ENCODE measurements at regions of chr12 and their contacts with region 1.

Region 1: GRCh38 chr12:59780605-59781135 is 184.8 kb downstream of the SLC16A7 start:
- DNase-seq: peak; percentile 52
- H3K4me3 Mint-ChIP-seq: no peak overlapping the region
- H3K27ac Mint-ChIP-seq: no peak overlapping the region
- H3K4me1 Mint-ChIP-seq: no peaks in the 10 kb centered on the region
- H3K27me3 Mint-ChIP-seq: no peaks in the 10 kb centered on the region
- CTCF ChIP-seq: peak; percentile 40

Region 2: DNA sequence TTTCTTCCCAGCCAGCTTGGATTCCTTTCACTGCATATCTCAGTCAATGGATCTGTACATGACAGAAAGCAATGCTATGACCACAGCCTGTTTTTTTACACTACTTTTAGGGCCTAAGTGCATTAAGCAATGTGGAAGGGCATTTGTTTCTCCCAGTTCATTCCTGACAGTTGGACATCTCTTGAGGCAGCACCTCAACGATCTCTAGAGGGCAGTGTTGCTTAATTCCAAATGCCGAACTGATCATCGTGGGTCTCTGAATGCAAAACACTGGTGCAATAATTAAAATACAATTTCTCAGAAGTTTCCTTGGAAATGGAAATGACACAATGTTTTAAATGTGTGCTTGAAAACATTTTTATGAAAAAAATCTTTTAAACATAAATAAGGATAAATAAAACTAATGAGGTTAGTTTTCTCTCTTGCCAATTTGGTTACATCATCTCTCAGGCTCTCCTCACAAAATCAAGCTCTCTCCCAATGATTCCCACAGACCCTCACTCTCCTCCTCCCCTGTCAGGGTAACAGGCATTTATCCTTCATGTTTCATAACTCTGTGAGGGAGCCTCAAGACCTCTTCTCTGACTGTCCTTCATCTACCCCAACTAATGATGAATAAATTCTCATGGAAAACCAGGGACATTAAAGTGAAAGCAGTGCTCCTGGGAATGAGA is 377.3 kb before region 1 on chr12:
- CTCF ChIA-PET with region 1: no interaction called
- POLR2A ChIA-PET with region 1: no interaction called
- intact Hi-C with region 1: loop called (anchors 1 kb)
- DNase-seq: peak; percentile 83
- H3K4me3 Mint-ChIP-seq: peak overlapping the region; percentile 4
- H3K27ac Mint-ChIP-seq: no peak overlapping the region
- H3K4me1 Mint-ChIP-seq: peaks cover 10% of the 10 kb centered on the region
- H3K27me3 Mint-ChIP-seq: no peaks in the 10 kb centered on the region
- CTCF ChIP-seq: peak; percentile 84

Region 3: DNA sequence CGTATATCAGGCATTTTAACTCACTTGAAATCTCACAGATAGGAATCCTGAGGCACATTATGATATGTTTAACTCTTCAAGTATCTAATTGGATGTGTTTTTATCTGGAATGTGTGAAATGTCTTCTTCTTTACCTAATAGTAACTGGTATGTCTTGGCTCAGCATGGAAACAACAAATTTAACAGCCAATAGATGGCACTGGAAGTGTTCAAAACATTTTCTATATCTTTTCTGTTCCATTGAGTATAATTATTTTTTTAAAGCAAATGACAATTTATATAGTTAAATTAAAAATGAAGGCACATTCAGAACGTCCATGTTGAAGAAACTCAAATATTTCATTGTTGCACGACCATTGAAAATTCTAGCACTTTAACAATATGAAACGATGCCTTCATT is 349.4 kb before region 1 on chr12:
- CTCF ChIA-PET with region 1: no interaction called
- POLR2A ChIA-PET with region 1: interaction called, 3 read pairs
- intact Hi-C with region 1: loop called (anchors 1 kb)
- DNase-seq: peak; percentile 16
- H3K4me3 Mint-ChIP-seq: no peak overlapping the region
- H3K27ac Mint-ChIP-seq: no peak overlapping the region
- H3K4me1 Mint-ChIP-seq: no peaks in the 10 kb centered on the region
- H3K27me3 Mint-ChIP-seq: no peaks in the 10 kb centered on the region
- CTCF ChIP-seq: peak; percentile 29

Region 4: DNA sequence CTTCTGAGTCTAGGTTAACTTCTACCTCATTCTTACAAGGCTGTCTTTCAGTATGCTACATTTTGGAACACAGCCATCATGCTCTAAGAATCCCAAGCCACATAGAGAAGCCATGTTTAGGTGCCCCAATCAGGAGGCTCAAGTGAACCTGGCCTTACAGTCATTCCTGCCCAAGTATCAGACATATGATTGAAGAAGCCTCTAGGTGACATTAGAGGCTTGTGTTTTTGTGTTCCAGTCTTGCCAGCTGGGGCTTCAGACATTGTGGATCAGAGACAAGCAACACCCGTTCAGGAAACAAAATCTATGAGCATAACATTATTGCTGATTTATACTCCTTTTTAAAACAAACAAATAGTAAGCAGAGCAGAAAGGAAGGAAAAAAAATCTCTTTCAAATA is 193.0 kb before region 1 on chr12:
- CTCF ChIA-PET with region 1: no interaction called
- POLR2A ChIA-PET with region 1: no interaction called
- intact Hi-C with region 1: no loop called
- DNase-seq: no peak
- H3K4me3 Mint-ChIP-seq: no peak overlapping the region
- H3K27ac Mint-ChIP-seq: no peak overlapping the region
- H3K4me1 Mint-ChIP-seq: no peaks in the 10 kb centered on the region
- H3K27me3 Mint-ChIP-seq: no peaks in the 10 kb centered on the region
- CTCF ChIP-seq: no peak

Region 5: GRCh38 chr12:59677857-59678256 is 102.8 kb before region 1 on chr12:
- CTCF ChIA-PET with region 1: no interaction called
- POLR2A ChIA-PET with region 1: no interaction called
- intact Hi-C with region 1: no loop called
- DNase-seq: no peak
- H3K4me3 Mint-ChIP-seq: no peak overlapping the region
- H3K27ac Mint-ChIP-seq: no peak overlapping the region
- H3K4me1 Mint-ChIP-seq: no peaks in the 10 kb centered on the region
- H3K27me3 Mint-ChIP-seq: no peaks in the 10 kb centered on the region
- CTCF ChIP-seq: no peak

Measured in MCF 10A (cell line).